ENCODE measurements at regions of chr12 and their contacts with region 1.

Region 1: DNA sequence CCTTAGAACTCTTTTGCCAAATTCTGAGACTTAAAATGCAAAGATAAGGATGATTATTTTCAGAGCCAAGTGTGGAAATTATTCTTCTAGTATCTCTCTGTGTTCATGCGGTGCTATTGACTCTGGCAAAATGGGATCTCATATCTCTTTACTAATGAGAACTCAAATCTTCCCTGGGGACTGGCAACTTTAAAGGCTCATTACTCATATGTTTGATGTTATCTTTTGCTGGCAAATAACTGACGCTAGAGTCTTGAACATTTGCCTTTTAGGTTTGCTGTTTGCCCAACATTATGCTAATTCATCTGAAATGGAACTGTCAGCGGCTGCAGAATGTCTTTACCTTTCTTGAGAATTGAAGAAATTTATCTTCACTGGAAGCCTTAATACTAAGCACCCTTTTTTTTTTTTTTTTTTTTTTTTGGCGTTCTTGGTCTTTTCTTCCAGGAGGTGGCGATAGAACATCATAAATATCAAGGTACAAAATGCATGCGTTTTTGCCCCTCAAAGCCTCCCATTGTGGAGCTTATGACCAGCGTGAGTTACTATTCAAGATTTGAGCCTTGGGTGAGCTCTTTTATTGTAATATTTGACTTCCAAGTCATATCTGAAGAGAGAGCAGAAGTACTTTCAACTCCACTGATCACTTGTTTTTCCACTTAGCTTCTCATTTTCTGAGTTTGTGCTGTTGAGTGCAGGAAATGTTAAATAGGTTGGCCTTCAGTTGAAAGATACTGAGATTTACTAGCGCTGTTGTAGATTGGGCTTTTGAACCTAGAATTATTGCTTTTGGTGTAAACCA is 86.6 kb downstream of the CAND1 start:
- DNase-seq: peak; percentile 20
- H3K4me3 ChIP-seq: no peak overlapping the region
- H3K27ac ChIP-seq: no peak overlapping the region
- H3K27me3 ChIP-seq: no peaks in the 10 kb centered on the region
- CTCF ChIP-seq: peak; percentile 66

Region 2: GRCh38 chr12:67415473-67415872 is 59.7 kb after region 1 on chr12:
- CTCF ChIA-PET with region 1: interaction called, 11 read pairs
- POLR2A ChIA-PET with region 1: interaction called, 6 read pairs
- DNase-seq: no peak
- H3K4me3 ChIP-seq: no peak overlapping the region
- H3K27ac ChIP-seq: no peak overlapping the region
- H3K27me3 ChIP-seq: no peaks in the 10 kb centered on the region
- CTCF ChIP-seq: peak; percentile 38; the same call in 1 of the 2 replicates

Region 3: GRCh38 chr12:67441736-67442346 is 86.1 kb after region 1 on chr12:
- CTCF ChIA-PET with region 1: interaction called, 141 read pairs
- POLR2A ChIA-PET with region 1: no interaction called
- DNase-seq: peak; percentile 67
- H3K4me3 ChIP-seq: no peak overlapping the region
- H3K27ac ChIP-seq: no peak overlapping the region
- H3K27me3 ChIP-seq: no peaks in the 10 kb centered on the region
- CTCF ChIP-seq: peak; percentile 91

Region 4: GRCh38 chr12:67648521-67649260 is 292.9 kb after region 1 on chr12 and contains the start of gene DYRK2:
- CTCF ChIA-PET with region 1: interaction called, 10 read pairs
- POLR2A ChIA-PET with region 1: no interaction called
- DNase-seq: no peak
- H3K4me3 ChIP-seq: peak within 1 kb of the TSS; percentile 83
- H3K27ac ChIP-seq: peak within 1 kb of the TSS; percentile 73
- H3K27me3 ChIP-seq: no peaks in the 10 kb centered on the region
- CTCF ChIP-seq: no peak
- polyA plus RNA-seq, gene DYRK2: 15.3 and 17.9 TPM in 2 replicates

Region 5: GRCh38 chr12:67943226-67943892 is 587.6 kb after region 1 on chr12:
- CTCF ChIA-PET with region 1: interaction called, 157 read pairs
- POLR2A ChIA-PET with region 1: interaction called, 5 read pairs
- DNase-seq: peak; percentile 38
- H3K4me3 ChIP-seq: no peak overlapping the region
- H3K27ac ChIP-seq: no peak overlapping the region
- H3K27me3 ChIP-seq: peaks cover 5% of the 10 kb centered on the region
- CTCF ChIP-seq: peak; percentile 74